ENCODE measurements at regions of chr6 and their contacts with region 1.

Region 1: GRCh38 chr6:89080542-89081422 is at the start of gene PNRC1:
- DNase-seq: peak; percentile 100
- ATAC-seq: peak; percentile 73 to 89 (median 74)
- H3K4me3 ChIP-seq: peak within 1 kb of the TSS; percentile 75
- H3K4me3 Mint-ChIP-seq: peak within 1 kb of the TSS; percentile 99
- H3K27ac ChIP-seq: peak within 1 kb of the TSS; percentile 97
- H3K27ac Mint-ChIP-seq: peak within 1 kb of the TSS; percentile 99
- H3K4me1 ChIP-seq: peaks cover 26% of the 10 kb centered on the region
- H3K4me1 Mint-ChIP-seq: peaks cover 53 to 59% of the 10 kb centered on the region in 2 donors
- H3K27me3 ChIP-seq: no peaks in the 10 kb centered on the region
- H3K27me3 Mint-ChIP-seq: no peaks in the 10 kb centered on the region
- CTCF ChIP-seq: no peak
- total RNA-seq, gene PNRC1: 695 to 970 (median 712) TPM

Region 2: DNA sequence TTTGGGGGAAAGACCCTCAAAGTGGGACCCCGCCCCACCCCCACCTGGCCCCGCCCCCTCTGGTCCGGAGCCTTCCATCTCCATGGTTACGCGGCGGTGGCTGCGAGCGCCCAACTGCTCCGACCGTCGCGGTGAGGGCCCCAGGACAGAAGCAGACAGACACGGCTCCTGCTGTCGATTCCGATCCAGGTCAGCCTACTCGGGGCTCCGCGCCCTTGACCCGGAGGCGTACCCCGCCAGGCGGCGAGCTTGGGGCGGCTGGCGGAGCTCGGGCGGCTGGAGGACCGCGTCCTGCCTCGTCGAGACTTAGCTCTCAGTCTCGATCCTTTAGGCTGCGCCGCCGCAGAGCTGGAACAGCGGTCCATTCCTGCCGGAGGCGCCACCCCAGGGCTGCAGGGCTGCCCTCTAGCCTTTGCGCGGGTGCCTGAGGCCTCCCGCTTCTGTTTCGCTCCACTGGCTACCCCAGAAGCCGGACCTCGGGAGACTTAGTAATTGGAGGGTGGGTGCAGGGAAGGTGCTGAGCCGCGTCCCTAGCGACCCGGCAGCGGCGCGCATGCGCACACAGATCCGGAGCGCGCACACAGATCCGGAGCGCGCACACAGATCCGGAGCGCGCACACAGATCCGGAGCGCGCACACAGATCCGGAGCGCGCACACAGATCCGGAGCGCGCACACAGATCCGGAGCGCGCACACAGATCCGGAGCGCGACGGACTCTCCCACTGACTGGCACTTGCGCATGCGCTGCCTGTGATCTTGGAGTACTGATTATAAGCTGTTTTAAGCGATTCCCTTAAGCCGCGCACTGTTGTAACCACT is 1672.7 kb before region 1 on chr6 and contains the start of gene CFAP206:
- intact Hi-C with region 1: loop called (anchors 10 kb)
- DNase-seq: peak; percentile 76 to 93
- ATAC-seq: peak; percentile 79 to 93 (median 83)
- H3K4me3 ChIP-seq: peak within 1 kb of the TSS; percentile 55
- H3K4me3 Mint-ChIP-seq: peak within 1 kb of the TSS; percentile 91
- H3K27ac ChIP-seq: peak within 1 kb of the TSS; percentile 48
- H3K27ac Mint-ChIP-seq: peak within 1 kb of the TSS; percentile 78
- H3K4me1 ChIP-seq: peaks cover 12% of the 10 kb centered on the region
- H3K4me1 Mint-ChIP-seq: peaks cover 6 to 16% of the 10 kb centered on the region in 2 donors
- H3K27me3 ChIP-seq: peaks cover 10% of the 10 kb centered on the region
- H3K27me3 Mint-ChIP-seq: peaks cover 9 to 32% of the 10 kb centered on the region in 2 donors
- CTCF ChIP-seq: no peak
- total RNA-seq, gene CFAP206: not detected

Region 3: DNA sequence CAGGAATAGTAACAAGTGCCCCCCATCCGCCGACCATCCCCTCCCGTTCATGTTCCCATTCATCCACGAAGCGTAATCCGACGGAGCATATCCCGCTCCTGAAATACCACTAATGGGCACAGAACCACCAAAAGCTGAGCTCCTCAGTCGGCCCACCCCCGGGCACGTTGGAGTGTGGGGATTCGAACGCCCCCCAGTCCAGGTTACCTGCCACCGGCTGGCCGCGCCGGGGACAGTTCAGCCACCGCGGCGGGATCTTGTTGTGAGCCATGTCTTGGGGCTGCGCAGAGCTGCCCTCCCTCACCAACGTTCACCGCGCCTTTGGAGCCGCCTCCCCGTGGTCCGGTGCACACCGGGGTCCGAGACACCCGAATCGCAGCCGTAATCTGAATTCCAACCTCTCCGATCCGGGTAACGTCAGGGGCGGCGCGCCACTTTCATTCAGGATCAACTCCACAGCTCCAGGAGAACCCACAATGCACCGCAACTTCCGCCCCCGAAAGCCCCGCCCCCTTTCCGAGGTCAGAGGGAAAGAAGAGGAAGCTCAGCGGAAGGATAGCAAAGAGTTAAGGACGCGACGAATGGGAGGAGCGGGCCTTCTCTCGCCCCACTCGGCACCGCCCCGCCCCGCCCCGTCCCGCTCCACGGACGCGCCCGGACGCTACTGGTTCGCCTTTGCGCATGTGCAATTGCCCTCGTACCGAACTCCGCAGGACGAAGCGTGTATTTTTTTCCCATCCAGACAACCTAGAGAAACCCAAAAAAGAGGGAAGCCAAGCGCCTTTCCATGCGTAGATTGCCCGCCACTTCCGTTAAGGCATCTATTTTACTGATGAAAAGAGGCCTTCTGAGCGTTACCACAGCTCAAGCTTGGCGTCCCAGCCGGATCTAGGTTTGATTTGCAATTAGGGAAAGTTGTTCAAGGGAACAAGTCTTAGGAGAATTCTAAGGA is 117.4 kb before region 1 on chr6 and contains the start of gene RNGTT:
- intact Hi-C with region 1: loop called (anchors 2 kb)
- DNase-seq: peak; percentile 92 to 97
- ATAC-seq: peak; percentile 99 to 100 (median 99)
- H3K4me3 ChIP-seq: peak within 1 kb of the TSS; percentile 90
- H3K4me3 Mint-ChIP-seq: peak within 1 kb of the TSS; percentile 93
- H3K27ac ChIP-seq: peak within 1 kb of the TSS; percentile 63
- H3K27ac Mint-ChIP-seq: peak within 1 kb of the TSS; percentile 89 to 93
- H3K4me1 ChIP-seq: peaks cover 17% of the 10 kb centered on the region
- H3K4me1 Mint-ChIP-seq: peaks cover 33 to 47% of the 10 kb centered on the region in 2 donors
- H3K27me3 ChIP-seq: no peaks in the 10 kb centered on the region
- H3K27me3 Mint-ChIP-seq: no peaks in the 10 kb centered on the region
- CTCF ChIP-seq: no peak
- total RNA-seq, gene RNGTT: 23.1 to 27.2 (median 23.1) TPM

Region 4: DNA sequence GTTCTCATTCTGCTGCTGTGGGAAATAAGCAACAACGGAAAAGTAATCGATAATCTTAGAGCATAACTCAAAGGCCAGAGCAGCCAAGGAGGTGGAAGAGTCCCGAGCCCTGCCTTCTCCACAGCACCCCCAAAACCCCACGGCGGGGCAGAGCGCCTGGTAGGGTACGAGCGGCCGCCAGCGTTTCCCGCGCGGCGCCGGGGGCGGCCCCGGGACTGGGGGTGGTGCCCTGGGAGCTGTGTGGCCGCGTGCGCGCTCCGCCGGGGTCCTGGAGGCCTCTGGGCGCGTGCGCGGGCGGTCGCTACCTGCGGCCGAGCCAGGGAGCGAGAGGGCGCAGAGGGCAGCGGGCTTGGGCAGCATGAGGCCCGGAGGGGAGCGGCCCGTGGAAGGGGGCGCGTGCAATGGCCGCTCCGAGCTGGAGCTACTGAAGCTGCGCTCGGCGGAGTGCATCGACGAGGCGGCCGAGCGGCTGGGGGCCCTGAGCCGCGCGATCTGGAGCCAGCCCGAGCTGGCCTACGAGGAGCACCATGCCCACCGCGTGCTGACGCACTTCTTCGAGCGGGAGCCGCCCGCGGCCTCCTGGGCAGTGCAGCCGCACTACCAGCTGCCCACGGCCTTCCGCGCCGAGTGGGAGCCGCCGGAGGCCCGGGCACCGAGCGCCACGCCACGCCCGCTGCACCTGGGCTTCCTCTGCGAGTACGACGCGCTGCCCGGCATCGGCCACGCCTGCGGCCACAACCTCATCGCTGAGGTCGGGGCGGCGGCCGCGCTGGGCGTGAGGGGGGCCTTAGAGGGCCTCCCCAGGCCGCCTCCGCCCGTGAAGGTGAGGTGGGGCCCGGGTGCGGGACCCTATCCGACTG is 65.2 kb after region 1 on chr6 and contains the start of gene PM20D2:
- intact Hi-C with region 1: loop called (anchors 1 kb)
- DNase-seq: peak; percentile 49 to 76
- ATAC-seq: peak; percentile 79 to 83 (median 80)
- H3K4me3 ChIP-seq: peak within 1 kb of the TSS; percentile 51
- H3K4me3 Mint-ChIP-seq: peak within 1 kb of the TSS; percentile 99
- H3K27ac ChIP-seq: peak within 1 kb of the TSS; percentile 70
- H3K27ac Mint-ChIP-seq: peak within 1 kb of the TSS; percentile 79 to 93
- H3K4me1 ChIP-seq: peaks cover 5% of the 10 kb centered on the region
- H3K4me1 Mint-ChIP-seq: peaks cover 14 to 15% of the 10 kb centered on the region in 2 donors
- H3K27me3 ChIP-seq: no peaks in the 10 kb centered on the region
- H3K27me3 Mint-ChIP-seq: no peaks in the 10 kb centered on the region
- CTCF ChIP-seq: no peak
- total RNA-seq, gene PM20D2: 4.0 to 6.1 (median 4.9) TPM

Region 5: DNA sequence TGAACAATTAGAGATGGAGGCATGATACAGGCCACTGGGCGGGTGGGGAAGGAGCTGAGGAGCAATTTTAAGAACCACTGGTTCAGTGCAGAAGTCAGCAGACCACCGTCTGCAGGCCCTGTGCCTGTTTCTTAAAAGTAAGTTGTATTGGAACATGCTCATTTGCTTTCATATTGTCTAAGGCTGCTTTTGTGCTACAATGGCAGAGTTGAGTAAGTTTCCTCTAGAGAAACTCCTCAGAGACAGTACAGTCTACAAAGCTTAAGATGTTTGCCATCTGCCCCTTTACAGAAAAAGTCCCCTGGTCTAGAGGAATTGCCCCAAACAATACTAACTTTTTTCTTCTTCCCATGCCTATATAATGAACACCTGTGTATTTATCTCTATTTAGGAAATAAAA is 300.2 kb after region 1 on chr6:
- intact Hi-C with region 1: loop called (anchors 2 kb)
- DNase-seq: no peak
- ATAC-seq: no peak
- H3K4me3 ChIP-seq: no peak overlapping the region
- H3K4me3 Mint-ChIP-seq: no peak overlapping the region
- H3K27ac ChIP-seq: no peak overlapping the region
- H3K27ac Mint-ChIP-seq: no peak overlapping the region
- H3K4me1 ChIP-seq: peaks cover 3% of the 10 kb centered on the region
- H3K4me1 Mint-ChIP-seq: peaks cover 3 to 4% of the 10 kb centered on the region in 2 donors
- H3K27me3 ChIP-seq: peaks cover 16% of the 10 kb centered on the region
- H3K27me3 Mint-ChIP-seq: peaks cover 38 to 44% of the 10 kb centered on the region in 2 donors
- CTCF ChIP-seq: no peak